IMR-90 (cell line): ENCODE measurements at regions of chr1 and their contacts with region 1.

Region 1: GRCh38 chr1:237146241-237146640 is 104.3 kb downstream of the RYR2 start:
- DNase-seq: peak; percentile 16
- ATAC-seq: peak; percentile 72
- H3K4me3 ChIP-seq: no peak overlapping the region
- H3K27ac ChIP-seq: no peak overlapping the region
- H3K4me1 ChIP-seq: no peaks in the 10 kb centered on the region
- H3K27me3 ChIP-seq: no peaks in the 10 kb centered on the region
- CTCF ChIP-seq: no peak
- POLR2A ChIP-seq: no peak
- RAD21 ChIP-seq: no peak

Region 2: DNA sequence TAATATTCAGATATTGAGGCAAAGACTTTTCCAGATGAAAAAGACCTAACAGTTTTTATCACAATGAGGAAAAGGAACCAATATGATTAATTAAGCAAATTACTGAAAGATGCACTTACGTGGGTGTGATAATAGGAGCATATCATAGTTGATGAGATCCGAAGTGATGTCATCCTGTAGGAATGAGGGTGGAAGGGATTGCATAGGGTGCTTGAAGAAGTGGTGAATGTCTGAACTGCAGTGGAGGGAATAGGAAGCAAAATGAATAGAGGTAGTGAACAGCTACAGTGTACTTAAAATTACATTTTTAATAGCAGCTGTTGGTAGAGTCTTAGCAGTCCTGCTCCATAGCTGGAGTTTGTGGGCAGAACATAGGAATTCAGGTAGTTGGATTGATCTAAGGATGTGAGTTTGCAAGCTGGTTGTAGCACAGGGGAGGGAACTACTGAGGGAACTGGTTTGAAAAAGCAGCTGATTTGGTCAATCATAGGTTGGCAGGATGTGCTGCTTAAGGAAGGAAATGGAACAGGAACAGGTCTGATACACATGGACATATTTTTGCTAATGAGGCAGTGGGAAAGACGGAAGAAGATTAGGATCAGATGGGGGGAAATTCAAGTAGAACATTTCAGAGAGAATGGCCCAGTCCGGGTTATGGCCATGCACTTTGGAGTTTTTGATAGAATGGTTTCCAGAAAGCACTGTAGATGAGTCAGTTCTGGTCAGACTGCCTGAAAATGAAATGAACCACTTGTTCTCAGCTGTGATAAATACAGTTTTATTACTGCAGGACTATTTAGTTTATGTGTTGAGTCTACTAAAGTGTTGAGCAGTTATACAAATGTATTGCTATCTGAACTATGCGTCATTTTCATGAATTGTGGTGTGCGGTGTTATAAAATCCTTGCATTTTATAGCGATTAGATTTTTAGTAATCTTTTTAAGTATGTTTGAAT is 51.5 kb after region 1 on chr1:
- CTCF ChIA-PET with region 1: no interaction called
- POLR2A ChIA-PET with region 1: no interaction called
- dilution Hi-C with region 1: no loop called
- in situ Hi-C with region 1: no loop called
- intact Hi-C with region 1: loop called (anchors 5 kb)
- DNase-seq: peak; percentile 16
- ATAC-seq: peak; percentile 88
- H3K4me3 ChIP-seq: no peak overlapping the region
- H3K27ac ChIP-seq: no peak overlapping the region
- H3K4me1 ChIP-seq: no peaks in the 10 kb centered on the region
- H3K27me3 ChIP-seq: no peaks in the 10 kb centered on the region
- CTCF ChIP-seq: no peak
- POLR2A ChIP-seq: no peak
- RAD21 ChIP-seq: no peak

Region 3: GRCh38 chr1:237269938-237270337 is 123.7 kb after region 1 on chr1:
- CTCF ChIA-PET with region 1: no interaction called
- POLR2A ChIA-PET with region 1: no interaction called
- dilution Hi-C with region 1: no loop called
- in situ Hi-C with region 1: no loop called
- intact Hi-C with region 1: loop called (anchors 5 kb)
- DNase-seq: no peak
- ATAC-seq: no peak
- H3K4me3 ChIP-seq: no peak overlapping the region
- H3K27ac ChIP-seq: no peak overlapping the region
- H3K4me1 ChIP-seq: no peaks in the 10 kb centered on the region
- H3K27me3 ChIP-seq: no peaks in the 10 kb centered on the region
- CTCF ChIP-seq: no peak
- POLR2A ChIP-seq: no peak
- RAD21 ChIP-seq: no peak